ENCODE measurements at regions of chr17 and their contacts with region 1.

Region 1: GRCh38 chr17:8991514-8992285 is 26.2 kb upstream of the PIK3R5 start:
- DNase-seq: peak; percentile 48 to 82 (median 54)
- ATAC-seq: peak; percentile 89
- H3K4me3 ChIP-seq: no peak overlapping the region
- H3K4me3 Mint-ChIP-seq: no peak overlapping the region
- H3K27ac ChIP-seq: no peak overlapping the region
- H3K27ac Mint-ChIP-seq: no peak overlapping the region
- H3K4me1 ChIP-seq: peaks cover 5% of the 10 kb centered on the region
- H3K4me1 Mint-ChIP-seq: peaks cover 5% of the 10 kb centered on the region
- H3K27me3 ChIP-seq: no peaks in the 10 kb centered on the region
- H3K27me3 Mint-ChIP-seq: peaks cover 3% of the 10 kb centered on the region
- CTCF ChIP-seq: peak; percentile 79

Region 2: DNA sequence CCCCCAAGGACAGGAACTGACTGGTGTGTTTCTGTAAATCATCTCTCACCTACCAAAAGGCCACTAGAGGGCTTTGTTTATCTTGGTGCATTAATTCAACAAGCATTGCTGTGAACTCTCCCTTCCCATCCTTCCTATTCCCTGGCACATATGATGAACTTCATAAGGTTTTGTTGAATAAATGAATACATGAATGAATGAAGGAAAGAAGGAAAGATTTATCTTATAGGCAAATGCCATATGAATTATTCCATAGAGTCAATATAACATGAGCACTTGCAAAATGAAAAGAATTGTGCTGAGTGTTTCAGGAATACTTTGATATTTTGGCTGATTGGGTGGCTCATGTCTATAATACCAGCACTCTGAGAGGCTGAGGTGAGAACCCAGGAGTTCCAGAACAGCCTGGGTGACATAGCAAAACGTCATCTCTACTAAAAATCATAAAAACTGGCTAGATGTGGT is 237.7 kb before region 1 on chr17:
- CTCF ChIA-PET with region 1: no interaction called
- POLR2A ChIA-PET with region 1: no interaction called
- intact Hi-C with region 1: loop called in 1 of 2 experiments (anchors 10 kb)
- DNase-seq: peak in 2 of 14 experiments; percentile 11 to 29
- ATAC-seq: no peak
- H3K4me3 ChIP-seq: no peak overlapping the region
- H3K4me3 Mint-ChIP-seq: no peak overlapping the region
- H3K27ac ChIP-seq: no peak overlapping the region
- H3K27ac Mint-ChIP-seq: no peak overlapping the region
- H3K4me1 ChIP-seq: no peaks in the 10 kb centered on the region
- H3K4me1 Mint-ChIP-seq: no peaks in the 10 kb centered on the region
- H3K27me3 ChIP-seq: peaks cover 0 to 4% of the 10 kb centered on the region in 2 experiments
- H3K27me3 Mint-ChIP-seq: peaks cover 18% of the 10 kb centered on the region
- CTCF ChIP-seq: no peak

Region 3: GRCh38 chr17:8785547-8786413 is 205.9 kb before region 1 on chr17:
- CTCF ChIA-PET with region 1: no interaction called
- POLR2A ChIA-PET with region 1: no interaction called
- intact Hi-C with region 1: loop called (anchors 5 to 10 kb)
- DNase-seq: peak; percentile 35 to 73 (median 55)
- ATAC-seq: peak; percentile 44
- H3K4me3 ChIP-seq: no peak overlapping the region
- H3K4me3 Mint-ChIP-seq: no peak overlapping the region
- H3K27ac ChIP-seq: no peak overlapping the region
- H3K27ac Mint-ChIP-seq: no peak overlapping the region
- H3K4me1 ChIP-seq: peaks cover 6% of the 10 kb centered on the region
- H3K4me1 Mint-ChIP-seq: no peaks in the 10 kb centered on the region
- H3K27me3 ChIP-seq: no peaks in the 10 kb centered on the region
- H3K27me3 Mint-ChIP-seq: no peaks in the 10 kb centered on the region
- CTCF ChIP-seq: peak; percentile 73

Region 4: GRCh38 chr17:8976638-8977037 is 15.1 kb before region 1 on chr17:
- CTCF ChIA-PET with region 1: no interaction called
- POLR2A ChIA-PET with region 1: no interaction called
- intact Hi-C with region 1: no loop called
- DNase-seq: no peak
- ATAC-seq: no peak
- H3K4me3 ChIP-seq: no peak overlapping the region
- H3K4me3 Mint-ChIP-seq: no peak overlapping the region
- H3K27ac ChIP-seq: no peak overlapping the region
- H3K27ac Mint-ChIP-seq: no peak overlapping the region
- H3K4me1 ChIP-seq: no peaks in the 10 kb centered on the region
- H3K4me1 Mint-ChIP-seq: no peaks in the 10 kb centered on the region
- H3K27me3 ChIP-seq: no peaks in the 10 kb centered on the region
- H3K27me3 Mint-ChIP-seq: no peaks in the 10 kb centered on the region
- CTCF ChIP-seq: no peak

Region 5: GRCh38 chr17:9090641-9091096 is 99.0 kb after region 1 on chr17:
- CTCF ChIA-PET with region 1: no interaction called
- POLR2A ChIA-PET with region 1: no interaction called
- intact Hi-C with region 1: no loop called
- DNase-seq: no peak
- ATAC-seq: no peak
- H3K4me3 ChIP-seq: no peak overlapping the region
- H3K4me3 Mint-ChIP-seq: no peak overlapping the region
- H3K27ac ChIP-seq: no peak overlapping the region
- H3K27ac Mint-ChIP-seq: no peak overlapping the region
- H3K4me1 ChIP-seq: no peaks in the 10 kb centered on the region
- H3K4me1 Mint-ChIP-seq: no peaks in the 10 kb centered on the region
- H3K27me3 ChIP-seq: peaks cover 0 to 3% of the 10 kb centered on the region in 2 experiments
- H3K27me3 Mint-ChIP-seq: peaks cover 4% of the 10 kb centered on the region
- CTCF ChIP-seq: no peak